OCI-LY7 (cell line): ENCODE measurements at regions of chr6 and their contacts with region 1.

Region 1: GRCh38 chr6:138970159-138970558 is 17.9 kb downstream of the REPS1 start:
- DNase-seq: no peak
- H3K4me3 ChIP-seq: no peak overlapping the region
- H3K27ac ChIP-seq: no peak overlapping the region
- H3K4me1 ChIP-seq: peaks cover 3% of the 10 kb centered on the region
- CTCF ChIP-seq: no peak

Region 2: DNA sequence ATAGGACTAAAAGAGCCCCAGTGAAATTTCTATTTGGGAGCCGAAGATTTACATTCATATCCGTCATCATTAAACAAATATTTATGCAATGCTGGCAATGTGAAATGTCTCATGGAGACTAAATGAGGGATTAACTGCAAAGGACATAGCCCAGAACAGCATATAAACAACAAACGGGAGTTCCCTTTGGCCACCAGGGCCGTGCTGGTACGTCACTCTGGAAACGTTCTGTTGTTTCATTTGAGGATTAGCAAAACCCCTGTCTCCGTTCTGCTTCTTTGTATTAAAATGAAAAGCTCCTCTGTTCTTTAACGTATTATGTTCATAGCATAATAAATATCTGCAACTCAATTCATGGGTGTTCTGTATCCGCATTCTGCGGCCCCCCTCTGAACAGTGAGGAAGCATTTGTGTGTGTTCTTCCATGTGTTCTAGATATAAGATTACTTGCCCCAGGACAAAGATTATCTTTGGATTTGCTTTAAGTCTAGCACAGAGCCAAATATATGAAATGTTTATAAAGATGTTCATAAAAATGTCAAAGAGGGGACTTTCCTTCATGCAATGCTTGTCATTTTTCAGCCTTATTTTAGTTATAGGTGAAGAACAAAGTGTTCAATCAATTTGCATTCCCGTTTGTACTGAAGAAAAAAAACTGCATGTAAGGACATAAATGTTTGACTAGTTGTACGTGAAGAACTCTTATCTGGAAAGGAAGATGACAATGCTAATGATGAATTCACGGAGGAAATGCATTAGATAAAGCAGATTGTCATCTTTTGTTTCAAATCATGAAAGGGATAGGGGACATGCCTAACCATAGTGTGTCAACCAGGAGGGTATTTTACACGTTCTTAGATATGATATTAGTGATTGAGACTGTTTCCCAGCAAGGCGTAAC is 1193.1 kb before region 1 on chr6:
- CTCF ChIA-PET with region 1: no interaction called
- POLR2A ChIA-PET with region 1: no interaction called
- intact Hi-C with region 1: no loop called
- DNase-seq: no peak
- H3K4me3 ChIP-seq: no peak overlapping the region
- H3K27ac ChIP-seq: no peak overlapping the region
- H3K4me1 ChIP-seq: no peaks in the 10 kb centered on the region
- CTCF ChIP-seq: no peak

Region 3: GRCh38 chr6:138953451-138953850 is 16.7 kb before region 1 on chr6:
- CTCF ChIA-PET with region 1: no interaction called
- POLR2A ChIA-PET with region 1: interaction called, 19 read pairs
- intact Hi-C with region 1: no loop called
- DNase-seq: no peak
- H3K4me3 ChIP-seq: no peak overlapping the region
- H3K27ac ChIP-seq: no peak overlapping the region
- H3K4me1 ChIP-seq: peaks cover 15% of the 10 kb centered on the region
- CTCF ChIP-seq: no peak